Activated CD4-positive, alpha-beta memory T cell treated with anti-CD3 and anti-CD28 coated beads for 36 hours (primary cell): ENCODE measurements at regions of chr3 and their contacts with region 1.

Region 1: DNA sequence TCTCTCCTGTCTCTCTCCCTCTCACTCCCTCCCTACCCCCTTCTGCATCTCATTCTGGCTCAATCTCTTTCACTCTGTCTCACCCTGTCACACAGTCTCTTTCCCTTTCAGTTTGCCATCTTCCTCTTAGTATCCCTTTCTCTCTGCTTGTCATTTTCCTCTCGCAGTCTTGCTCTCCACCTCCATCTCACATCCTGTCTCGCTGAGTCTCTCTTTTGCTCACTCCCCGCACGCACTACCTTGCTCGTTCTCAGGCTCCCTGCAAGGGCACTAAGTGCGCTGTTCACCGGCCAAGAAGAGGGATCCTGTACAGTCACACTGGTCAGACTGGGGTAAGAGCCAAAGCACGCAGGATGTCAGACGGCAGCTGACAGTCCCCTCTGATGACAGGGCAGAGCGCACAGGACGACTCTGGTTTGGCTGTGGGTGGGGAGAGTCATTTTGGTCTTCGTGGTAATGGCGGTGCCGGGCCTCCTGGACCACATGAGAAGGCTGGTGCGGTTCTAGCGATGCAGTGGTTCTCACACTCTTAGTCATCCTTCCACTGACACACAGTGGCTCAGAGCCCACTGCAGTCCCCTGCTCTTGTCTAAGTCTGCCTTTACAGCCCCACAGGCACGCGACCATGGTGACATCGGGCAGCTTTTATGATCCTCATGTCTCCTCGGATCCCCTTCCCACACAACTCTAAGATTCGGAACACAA is 356.8 kb downstream of the FOXP1 start:
- DNase-seq: peak; percentile 96
- H3K4me3 Mint-ChIP-seq: peak overlapping the region; percentile 77
- H3K27ac Mint-ChIP-seq: peak overlapping the region; percentile 96
- H3K4me1 Mint-ChIP-seq: peaks cover 77% of the 10 kb centered on the region
- H3K27me3 Mint-ChIP-seq: no peaks in the 10 kb centered on the region

Region 2: DNA sequence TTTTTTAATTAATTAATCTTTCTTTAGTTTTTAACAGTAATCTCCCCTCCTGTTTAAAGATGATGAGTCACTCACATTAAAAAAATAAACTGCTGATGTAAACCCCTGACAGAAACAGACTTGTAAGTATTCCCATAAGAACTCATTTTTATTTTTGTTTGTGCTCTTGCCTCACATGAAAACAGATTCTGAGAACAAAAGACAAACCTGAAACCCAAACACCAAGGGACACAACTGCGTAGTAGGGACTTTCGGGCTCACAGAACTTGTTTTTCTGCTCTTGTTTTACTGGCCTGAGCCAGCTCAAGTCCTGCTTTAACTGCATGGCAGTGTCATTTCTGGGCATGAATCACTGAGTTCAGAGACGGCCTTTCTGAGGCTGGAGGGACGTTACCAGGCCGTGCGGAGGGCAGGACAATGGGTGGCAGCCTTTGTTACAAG is 244.0 kb before region 1 on chr3:
- CTCF ChIA-PET with region 1: no interaction called
- POLR2A ChIA-PET with region 1: no interaction called
- intact Hi-C with region 1: loop called (anchors 2 kb)
- DNase-seq: peak; percentile 70
- H3K4me3 Mint-ChIP-seq: peak overlapping the region; percentile 57
- H3K27ac Mint-ChIP-seq: peak overlapping the region; percentile 99
- H3K4me1 Mint-ChIP-seq: peaks cover 64% of the 10 kb centered on the region
- H3K27me3 Mint-ChIP-seq: no peaks in the 10 kb centered on the region

Region 3: GRCh38 chr3:71080517-71081083 is 146.1 kb before region 1 on chr3:
- CTCF ChIA-PET with region 1: no interaction called
- POLR2A ChIA-PET with region 1: interaction called, 4 read pairs
- intact Hi-C with region 1: loop called (anchors 1 kb)
- DNase-seq: no peak
- H3K4me3 Mint-ChIP-seq: peak overlapping the region; percentile 25
- H3K27ac Mint-ChIP-seq: peak overlapping the region; percentile 74
- H3K4me1 Mint-ChIP-seq: peaks cover 92% of the 10 kb centered on the region
- H3K27me3 Mint-ChIP-seq: no peaks in the 10 kb centered on the region

Region 4: GRCh38 chr3:71189480-71189879 is 37.2 kb before region 1 on chr3:
- CTCF ChIA-PET with region 1: interaction called, 3 read pairs
- POLR2A ChIA-PET with region 1: no interaction called
- intact Hi-C with region 1: loop called (anchors 1 kb)
- DNase-seq: no peak
- H3K4me3 Mint-ChIP-seq: no peak overlapping the region
- H3K27ac Mint-ChIP-seq: peak overlapping the region; percentile 84
- H3K4me1 Mint-ChIP-seq: peaks cover 82% of the 10 kb centered on the region
- H3K27me3 Mint-ChIP-seq: no peaks in the 10 kb centered on the region

Region 5: GRCh38 chr3:71360764-71361163 is 134.0 kb after region 1 on chr3:
- CTCF ChIA-PET with region 1: no interaction called
- POLR2A ChIA-PET with region 1: interaction called, 6 read pairs
- intact Hi-C with region 1: loop called (anchors 1 kb)
- DNase-seq: peak; percentile 52
- H3K4me3 Mint-ChIP-seq: peak overlapping the region; percentile 39
- H3K27ac Mint-ChIP-seq: peak overlapping the region; percentile 89
- H3K4me1 Mint-ChIP-seq: peaks cover 76% of the 10 kb centered on the region
- H3K27me3 Mint-ChIP-seq: no peaks in the 10 kb centered on the region

Region 6: GRCh38 chr3:71495708-71496472 is 269.2 kb after region 1 on chr3:
- CTCF ChIA-PET with region 1: no interaction called
- POLR2A ChIA-PET with region 1: interaction called, 3 read pairs
- intact Hi-C with region 1: loop called (anchors 2 kb)
- DNase-seq: peak; percentile 62
- H3K4me3 Mint-ChIP-seq: peak overlapping the region; percentile 58
- H3K27ac Mint-ChIP-seq: peak overlapping the region; percentile 77
- H3K4me1 Mint-ChIP-seq: peaks cover 73% of the 10 kb centered on the region
- H3K27me3 Mint-ChIP-seq: no peaks in the 10 kb centered on the region